ENCODE measurements at regions of chr7 and their contacts with region 1.

Region 1: GRCh38 chr7:37201003-37201875 is 247.4 kb downstream of the ELMO1 start:
- DNase-seq: peak; percentile 59
- H3K4me3 ChIP-seq: no peak overlapping the region
- H3K27ac ChIP-seq: no peak overlapping the region
- H3K4me1 ChIP-seq: no peaks in the 10 kb centered on the region
- H3K27me3 ChIP-seq: no peaks in the 10 kb centered on the region
- CTCF ChIP-seq: peak; percentile 79 to 83

Region 2: DNA sequence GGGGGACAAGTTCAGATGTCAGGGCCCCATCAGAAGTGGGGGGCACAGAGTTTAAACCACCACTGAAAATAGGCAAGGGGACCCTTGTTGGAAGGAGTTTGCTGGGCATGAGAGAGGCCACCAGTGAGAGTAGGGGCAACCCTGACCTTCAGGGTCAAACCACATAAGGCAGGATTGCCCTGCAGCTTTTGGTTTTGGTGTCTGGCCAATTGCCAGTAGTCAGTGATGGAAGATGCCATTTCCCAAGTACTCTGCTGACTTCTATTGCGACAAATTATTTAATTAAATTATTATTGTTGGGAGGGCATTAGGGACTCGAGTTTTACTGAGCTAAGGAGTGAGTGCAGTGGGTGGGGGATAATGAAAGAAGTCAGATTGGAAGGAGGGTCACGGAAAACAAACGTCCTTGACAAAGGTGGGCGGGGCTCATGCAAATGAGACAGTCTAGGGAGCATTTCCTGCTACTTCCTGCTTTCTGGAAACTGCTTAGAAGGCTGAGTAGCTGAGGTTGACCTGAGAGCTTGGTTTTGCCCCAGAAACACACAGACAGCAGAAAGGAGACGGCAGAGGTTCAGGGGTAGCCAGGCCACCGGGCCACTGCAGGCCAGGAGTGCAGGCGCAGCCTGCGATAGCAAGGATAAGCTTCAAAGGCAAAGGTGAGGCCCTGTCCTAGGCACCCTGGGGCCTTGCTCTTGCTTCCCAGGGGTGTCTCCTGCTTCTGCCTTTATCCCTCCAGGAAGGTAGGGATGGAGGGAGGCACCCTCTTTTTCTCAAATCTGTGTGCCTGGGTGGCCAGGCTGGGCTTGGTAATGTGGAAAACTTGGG is 885.7 kb before region 1 on chr7:
- CTCF ChIA-PET with region 1: no interaction called
- dilution Hi-C with region 1: no loop called
- in situ Hi-C with region 1: no loop called
- intact Hi-C with region 1: loop called (anchors 2 kb)
- DNase-seq: no peak
- H3K4me3 ChIP-seq: no peak overlapping the region
- H3K27ac ChIP-seq: no peak overlapping the region
- H3K4me1 ChIP-seq: no peaks in the 10 kb centered on the region
- H3K27me3 ChIP-seq: peaks cover 2% of the 10 kb centered on the region
- CTCF ChIP-seq: no peak

Region 3: DNA sequence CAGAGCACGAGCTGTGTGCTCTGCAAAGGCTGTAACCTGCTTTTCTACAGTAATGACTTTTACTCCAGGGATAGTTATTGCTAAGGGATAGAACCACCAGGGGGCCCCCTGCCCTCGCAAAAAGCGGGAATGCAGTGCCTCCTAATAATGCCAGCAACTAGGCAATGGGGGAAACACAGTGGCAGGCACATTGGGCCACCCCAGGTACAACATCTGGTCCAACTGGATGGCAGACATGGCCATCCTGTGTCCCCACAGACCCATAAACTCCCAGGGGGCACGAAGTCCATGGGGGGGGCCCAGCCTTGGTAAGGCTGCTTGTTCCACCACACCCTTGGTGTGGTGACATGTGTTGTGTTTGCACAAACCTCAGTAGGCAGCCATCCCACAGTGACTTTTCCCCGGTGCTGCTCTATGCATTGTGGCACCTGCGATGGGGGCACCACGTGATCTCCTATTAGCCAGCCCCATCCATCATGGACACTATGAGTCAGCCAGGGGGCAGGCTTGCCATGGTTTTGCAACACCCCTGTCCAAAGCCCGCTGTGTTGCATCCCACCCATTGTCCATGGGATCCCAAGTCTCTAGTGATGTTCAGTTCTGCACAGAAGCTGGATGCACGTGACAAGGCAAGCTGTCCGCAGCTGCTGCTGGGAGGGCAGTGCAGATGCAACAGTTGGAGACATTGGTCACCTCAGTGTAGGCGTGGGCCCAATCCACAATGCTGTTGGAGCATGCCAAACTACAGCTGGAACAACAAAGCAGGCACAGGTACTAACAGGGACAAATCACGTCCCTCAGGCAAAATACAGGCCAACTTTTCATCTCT is 727.6 kb before region 1 on chr7:
- CTCF ChIA-PET with region 1: no interaction called
- dilution Hi-C with region 1: no loop called
- in situ Hi-C with region 1: loop called in 1 of 2 experiments (anchors 10 kb)
- intact Hi-C with region 1: loop called (anchors 1 kb)
- DNase-seq: peak; percentile 93
- H3K4me3 ChIP-seq: no peak overlapping the region
- H3K27ac ChIP-seq: peak overlapping the region; percentile 68
- H3K4me1 ChIP-seq: peaks cover 31% of the 10 kb centered on the region
- H3K27me3 ChIP-seq: no peaks in the 10 kb centered on the region
- CTCF ChIP-seq: peak; percentile 38 to 52

Region 4: DNA sequence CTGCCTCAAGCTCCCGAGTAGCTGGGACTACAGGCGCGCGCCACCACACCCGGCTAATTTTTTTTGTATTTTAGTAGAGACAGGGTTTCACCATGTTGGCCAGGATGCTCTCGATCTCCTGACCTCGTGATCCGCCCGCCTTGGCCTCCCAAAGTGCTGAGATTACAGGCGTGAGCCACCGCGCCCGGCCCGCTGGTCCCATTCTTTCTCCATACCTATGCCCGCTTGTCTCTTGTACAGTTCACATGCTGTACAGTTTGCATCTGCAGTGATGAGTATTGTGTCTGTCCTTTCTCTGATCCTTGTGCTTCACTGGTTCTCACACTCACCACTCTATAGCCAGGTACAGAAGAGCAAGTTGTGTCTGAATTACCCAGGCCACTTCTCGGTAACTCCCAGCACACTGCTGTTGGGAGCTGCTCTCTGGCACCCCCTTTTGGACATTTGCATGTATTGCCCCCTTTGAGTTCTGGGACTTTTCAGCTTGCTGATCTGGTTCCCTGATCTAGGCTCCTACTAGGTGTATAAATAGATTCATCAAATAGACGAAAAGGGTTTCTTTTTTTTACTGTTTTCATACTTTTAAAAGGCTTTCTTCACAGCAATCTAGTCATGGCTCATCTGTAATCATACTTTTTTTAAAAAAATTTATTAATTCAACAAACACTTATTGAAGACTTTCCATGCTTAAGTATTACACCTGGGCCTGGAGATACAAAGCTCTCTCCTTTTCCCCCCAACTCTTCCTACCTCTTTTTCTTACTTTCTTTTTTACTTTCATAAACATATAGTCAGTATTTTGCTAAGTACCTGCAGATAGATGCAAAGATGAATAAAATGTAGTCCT is 530.4 kb before region 1 on chr7:
- CTCF ChIA-PET with region 1: interaction called, 4 read pairs
- dilution Hi-C with region 1: no loop called
- in situ Hi-C with region 1: no loop called
- intact Hi-C with region 1: loop called (anchors 5 kb)
- DNase-seq: peak; percentile 76
- H3K4me3 ChIP-seq: no peak overlapping the region
- H3K27ac ChIP-seq: no peak overlapping the region
- H3K4me1 ChIP-seq: peaks cover 29% of the 10 kb centered on the region
- H3K27me3 ChIP-seq: no peaks in the 10 kb centered on the region
- CTCF ChIP-seq: peak; percentile 94 to 96

Region 5: GRCh38 chr7:36949711-36950600 is 251.3 kb before region 1 on chr7:
- CTCF ChIA-PET with region 1: no interaction called
- dilution Hi-C with region 1: no loop called
- in situ Hi-C with region 1: no loop called
- intact Hi-C with region 1: no loop called
- DNase-seq: no peak
- H3K4me3 ChIP-seq: no peak overlapping the region
- H3K27ac ChIP-seq: no peak overlapping the region
- H3K4me1 ChIP-seq: no peaks in the 10 kb centered on the region
- H3K27me3 ChIP-seq: no peaks in the 10 kb centered on the region
- CTCF ChIP-seq: no peak

Region 6: GRCh38 chr7:36967387-36967786 is 233.9 kb before region 1 on chr7:
- CTCF ChIA-PET with region 1: interaction called, 4 read pairs
- dilution Hi-C with region 1: no loop called
- in situ Hi-C with region 1: no loop called
- intact Hi-C with region 1: loop called (anchors 1 kb)
- DNase-seq: peak; percentile 52
- H3K4me3 ChIP-seq: no peak overlapping the region
- H3K27ac ChIP-seq: no peak overlapping the region
- H3K4me1 ChIP-seq: no peaks in the 10 kb centered on the region
- H3K27me3 ChIP-seq: no peaks in the 10 kb centered on the region
- CTCF ChIP-seq: peak; percentile 74 to 78

Region 7: GRCh38 chr7:37160656-37161055 is 40.6 kb before region 1 on chr7:
- CTCF ChIA-PET with region 1: no interaction called
- dilution Hi-C with region 1: no loop called
- in situ Hi-C with region 1: no loop called
- intact Hi-C with region 1: no loop called
- DNase-seq: no peak
- H3K4me3 ChIP-seq: no peak overlapping the region
- H3K27ac ChIP-seq: no peak overlapping the region
- H3K4me1 ChIP-seq: no peaks in the 10 kb centered on the region
- H3K27me3 ChIP-seq: no peaks in the 10 kb centered on the region
- CTCF ChIP-seq: no peak

Region 8: GRCh38 chr7:37187179-37187578 is 14.1 kb before region 1 on chr7:
- CTCF ChIA-PET with region 1: no interaction called
- dilution Hi-C with region 1: no loop called
- in situ Hi-C with region 1: no loop called
- intact Hi-C with region 1: no loop called
- DNase-seq: no peak
- H3K4me3 ChIP-seq: no peak overlapping the region
- H3K27ac ChIP-seq: no peak overlapping the region
- H3K4me1 ChIP-seq: no peaks in the 10 kb centered on the region
- H3K27me3 ChIP-seq: no peaks in the 10 kb centered on the region
- CTCF ChIP-seq: no peak

Region 9: DNA sequence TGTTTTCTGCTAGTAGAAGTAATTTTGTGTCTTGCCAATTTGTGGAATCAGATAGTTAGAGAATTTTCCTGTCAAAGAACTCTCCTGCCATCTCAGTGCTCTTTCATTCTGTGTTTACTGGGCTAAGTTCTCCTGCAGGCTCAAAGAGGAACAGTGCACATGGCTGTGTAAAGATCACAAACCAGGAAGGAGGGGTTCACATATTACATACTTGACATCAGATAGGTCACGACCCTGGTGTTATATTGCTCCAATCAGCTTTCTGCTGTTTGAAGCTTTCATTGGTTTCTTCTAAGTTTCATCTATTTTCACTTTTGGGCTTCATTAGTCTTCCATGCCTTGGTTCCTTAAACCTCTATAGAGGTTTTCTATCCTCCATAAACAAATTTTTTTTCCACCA is 260.9 kb after region 1 on chr7:
- CTCF ChIA-PET with region 1: no interaction called
- dilution Hi-C with region 1: no loop called
- in situ Hi-C with region 1: no loop called
- intact Hi-C with region 1: no loop called
- DNase-seq: no peak
- H3K4me3 ChIP-seq: no peak overlapping the region
- H3K27ac ChIP-seq: no peak overlapping the region
- H3K4me1 ChIP-seq: no peaks in the 10 kb centered on the region
- H3K27me3 ChIP-seq: no peaks in the 10 kb centered on the region
- CTCF ChIP-seq: no peak

Region 10: DNA sequence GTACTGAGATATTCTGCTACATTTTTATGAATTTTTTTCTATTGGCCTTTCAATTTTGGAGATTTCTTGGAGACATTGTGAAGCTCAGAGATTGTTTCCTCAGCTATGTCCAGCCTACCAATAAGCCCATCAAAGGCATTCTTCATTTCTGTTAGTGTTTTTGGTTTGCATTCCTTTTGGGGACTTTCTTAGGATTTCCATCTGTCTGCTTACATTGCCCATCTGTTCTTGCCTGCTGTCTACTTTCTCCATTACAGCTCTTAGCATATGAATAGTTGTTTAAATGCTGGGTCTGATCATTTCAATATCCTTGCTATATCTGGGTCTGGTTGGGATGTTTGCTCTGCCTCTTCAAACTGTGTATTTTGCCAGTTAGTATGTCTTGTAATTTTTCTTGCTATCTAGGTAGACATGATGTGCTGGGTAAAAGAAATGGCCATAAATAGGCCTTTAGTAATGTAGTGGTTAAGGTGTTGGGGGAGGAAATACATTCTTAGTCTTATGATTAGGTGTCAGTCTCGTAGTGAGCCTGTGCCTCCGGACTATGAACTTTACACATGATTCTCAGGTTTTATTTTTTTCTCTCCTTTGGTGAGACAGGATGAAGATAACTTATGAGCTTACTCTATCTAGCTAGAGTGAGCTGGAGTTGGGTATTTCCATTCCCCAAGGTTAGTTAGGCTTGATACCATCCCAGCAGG is 614.6 kb after region 1 on chr7:
- CTCF ChIA-PET with region 1: no interaction called
- dilution Hi-C with region 1: loop called (anchors 25 kb)
- in situ Hi-C with region 1: no loop called
- intact Hi-C with region 1: no loop called
- DNase-seq: no peak
- H3K4me3 ChIP-seq: no peak overlapping the region
- H3K27ac ChIP-seq: no peak overlapping the region
- H3K4me1 ChIP-seq: no peaks in the 10 kb centered on the region
- H3K27me3 ChIP-seq: no peaks in the 10 kb centered on the region
- CTCF ChIP-seq: no peak

Measured in mammary epithelial cell (primary cell).